Left colon (tissue), 2 donors: ENCODE measurements at regions of chr19 and their contacts with region 1.

Region 1: GRCh38 chr19:40139533-40140287 is 49.0 kb upstream of the ZNF780A start:
- DNase-seq: no peak
- ATAC-seq: peak; percentile 65

Region 2: DNA sequence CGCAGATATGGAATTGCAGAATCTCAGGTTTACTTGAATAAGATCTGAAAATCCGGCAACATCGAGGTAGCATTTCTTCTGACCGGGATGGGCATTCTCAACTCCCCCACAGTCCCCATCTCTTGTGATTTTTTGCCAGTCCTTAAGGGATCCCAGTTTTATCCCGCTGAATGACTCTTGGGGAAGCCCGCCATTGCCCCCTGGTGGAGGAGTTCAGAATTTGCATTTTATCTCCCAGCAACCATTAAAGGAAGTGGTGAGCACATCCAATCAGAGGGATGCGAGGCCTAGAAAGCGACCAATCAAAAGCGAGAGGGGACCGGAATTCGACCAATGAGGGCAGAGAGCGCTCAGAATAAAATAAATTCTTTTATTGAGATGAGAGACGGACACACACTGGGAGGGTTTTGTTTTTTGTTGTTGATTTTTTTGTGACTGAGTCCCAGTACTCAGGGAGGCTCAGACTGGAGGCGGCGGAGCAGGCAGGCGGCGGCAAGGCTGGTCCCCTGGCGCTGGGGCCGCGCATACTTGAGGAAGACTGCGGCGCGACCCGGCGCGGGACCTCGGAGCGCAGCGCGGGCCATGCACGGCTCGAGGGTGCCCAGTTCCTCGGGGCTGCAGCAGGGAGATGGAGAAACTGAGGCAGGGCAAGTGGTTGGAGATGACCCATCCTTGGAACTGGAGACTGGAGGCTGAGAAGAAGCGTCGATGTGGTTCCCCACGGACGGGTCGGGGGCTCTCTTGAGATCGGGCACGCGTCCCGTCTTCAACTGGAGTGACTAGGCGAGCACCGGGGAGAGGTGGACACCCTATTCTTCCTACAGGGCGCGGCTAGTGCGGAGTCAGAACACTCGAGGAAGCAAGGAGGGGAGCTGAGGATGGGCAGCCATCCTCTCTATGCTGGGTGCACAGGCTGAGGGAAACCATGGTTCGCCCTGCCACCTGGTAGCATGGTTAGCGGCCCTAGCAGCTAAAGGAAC is 82.4 kb after region 1 on chr19:
- intact Hi-C with region 1: loop called in 1 of 2 experiments (anchors 5 kb)
- DNase-seq: peak; percentile 67 to 75
- ATAC-seq: peak; percentile 70

Region 3: DNA sequence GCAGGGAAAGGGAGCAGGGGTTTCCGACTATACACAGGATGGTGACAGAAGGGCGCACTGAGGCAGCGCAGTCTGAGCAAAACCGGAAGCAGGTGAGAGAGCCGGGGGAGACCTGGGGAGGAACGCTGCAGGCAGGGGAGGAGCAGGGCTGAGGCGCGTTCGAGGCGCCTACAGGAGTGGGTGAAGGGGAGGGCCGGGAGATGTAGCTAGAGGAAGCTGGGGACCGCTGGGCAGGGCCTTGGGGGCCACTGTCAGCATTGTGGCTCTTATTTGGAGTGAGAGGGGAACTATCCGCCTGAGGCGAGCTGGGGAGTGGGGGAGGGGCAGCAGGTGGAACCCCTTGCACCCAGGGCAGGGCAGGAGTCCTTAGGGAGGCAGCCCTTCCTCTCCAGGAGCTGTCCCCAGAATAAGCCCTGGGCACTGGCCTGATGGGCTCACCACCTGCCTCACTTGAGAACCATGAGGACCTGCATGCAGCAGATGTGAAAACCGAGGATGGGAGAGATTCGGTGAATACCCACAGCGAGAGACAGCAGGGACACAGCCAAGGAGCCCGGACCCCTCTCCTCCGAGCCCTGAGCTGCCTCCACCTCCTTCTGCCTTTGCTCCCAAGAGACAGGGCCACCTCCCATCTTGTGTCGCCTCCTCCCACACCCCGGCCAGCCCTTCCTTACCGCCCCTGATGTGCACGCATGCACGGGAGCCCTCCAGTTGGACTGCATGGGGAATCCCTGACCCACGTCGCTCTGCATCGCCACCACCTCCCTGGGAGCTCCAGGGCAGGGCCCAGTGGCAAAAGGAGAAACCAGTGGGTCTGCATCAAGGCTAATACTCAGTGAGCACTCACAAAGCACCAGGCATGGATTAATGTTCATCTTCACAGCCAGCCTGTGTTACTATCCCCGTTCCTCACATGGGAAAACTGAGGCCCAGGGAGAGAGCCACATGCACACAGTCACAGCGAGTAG is 135.2 kb after region 1 on chr19:
- intact Hi-C with region 1: no loop called
- DNase-seq: no peak
- ATAC-seq: no peak